H1 (cell line): ENCODE measurements at regions of chr12 and their contacts with region 1.

Region 1: DNA sequence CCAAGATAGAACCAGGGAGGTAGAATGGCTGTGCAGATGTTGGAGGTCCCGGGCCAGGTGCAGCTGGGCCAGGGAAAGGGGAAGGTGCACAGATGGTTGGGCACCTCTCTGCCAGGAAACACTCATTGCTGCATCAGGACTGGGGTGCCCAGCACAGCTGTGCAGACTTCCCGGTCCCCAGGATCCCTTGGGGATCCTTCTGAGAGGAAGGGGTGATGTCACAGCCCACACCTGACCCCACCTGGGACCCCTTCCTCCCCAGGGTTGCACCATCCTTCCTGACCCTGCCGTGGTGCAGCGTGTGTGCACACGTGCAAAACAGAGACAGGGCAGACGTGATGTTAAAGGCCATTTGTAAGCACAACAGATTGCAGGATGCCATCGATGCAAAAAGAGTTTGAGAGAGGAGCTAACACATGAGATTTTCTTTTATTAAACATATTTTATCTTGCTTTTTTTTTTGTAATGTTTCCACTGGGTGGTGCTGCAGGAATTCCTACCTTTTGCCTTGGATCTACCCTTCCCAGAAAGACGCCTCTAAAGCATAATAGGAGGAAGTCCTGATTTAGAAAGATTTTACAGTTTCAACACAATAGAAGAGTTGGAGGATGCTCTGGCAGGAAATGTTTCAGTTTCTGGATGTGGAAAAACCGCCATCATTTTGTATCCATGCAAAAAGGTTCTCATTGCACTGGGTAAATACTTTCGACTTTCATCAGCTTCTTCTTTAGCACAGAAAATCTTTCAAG is 14.8 kb downstream of the ELK3 start:
- DNase-seq: no peak
- H3K4me3 ChIP-seq: no peak overlapping the region
- H3K27ac ChIP-seq: no peak overlapping the region
- H3K4me1 ChIP-seq: peaks cover 0 to 9% (median 3%) of the 10 kb centered on the region in 4 experiments; a peak in 3 of 7 replicates
- H3K27me3 ChIP-seq: no peaks in the 10 kb centered on the region
- CTCF ChIP-seq: 0 out of 4 replicates have a peak, but pooled peaks of 1 of the 3 experiments have one; percentile 4
- EP300 ChIP-seq: no peak
- POLR2A ChIP-seq: no peak
- RAD21 ChIP-seq: peak; percentile 34 to 36

Region 2: GRCh38 chr12:95942524-95943329 is 266.2 kb before region 1 on chr12 and contains the start of gene CCDC38:
- CTCF ChIA-PET with region 1: no interaction called
- POLR2A ChIA-PET with region 1: no interaction called
- DNase-seq: peak in 1 of 2 experiments; percentile 84
- H3K4me3 ChIP-seq: peak within 1 kb of the TSS; percentile 59 to 95 (median 74)
- H3K27ac ChIP-seq: no peak within 1 kb of the TSS
- H3K4me1 ChIP-seq: peaks cover 0 to 4% (median under 1%) of the 10 kb centered on the region in 4 experiments; a peak in 3 of 7 replicates
- H3K27me3 ChIP-seq: peaks cover 0 to 11% (median 10%) of the 10 kb centered on the region in 4 experiments; a peak in 5 of 7 replicates
- CTCF ChIP-seq: no peak
- EP300 ChIP-seq: no peak
- POLR2A ChIP-seq: peak in 1 of 2 experiments; percentile 28; a peak in 1 of 3 replicates
- RAD21 ChIP-seq: no peak
- total RNA-seq, gene CCDC38: not detected in 2 replicates

Region 3: GRCh38 chr12:96015672-96016071 is 193.3 kb before region 1 on chr12:
- CTCF ChIA-PET with region 1: interaction called, 12 read pairs
- POLR2A ChIA-PET with region 1: no interaction called
- DNase-seq: no peak
- H3K4me3 ChIP-seq: no peak overlapping the region
- H3K27ac ChIP-seq: no peak overlapping the region
- H3K4me1 ChIP-seq: no peaks in the 10 kb centered on the region
- H3K27me3 ChIP-seq: peaks cover 0 to 1% (median 0%) of the 10 kb centered on the region in 4 experiments; a peak in 1 of 7 replicates
- CTCF ChIP-seq: peak; percentile 42 to 52 (median 50)
- EP300 ChIP-seq: no peak
- POLR2A ChIP-seq: no peak
- RAD21 ChIP-seq: peak; percentile 28 to 45; a peak in 3 of 4 replicates

Region 4: DNA sequence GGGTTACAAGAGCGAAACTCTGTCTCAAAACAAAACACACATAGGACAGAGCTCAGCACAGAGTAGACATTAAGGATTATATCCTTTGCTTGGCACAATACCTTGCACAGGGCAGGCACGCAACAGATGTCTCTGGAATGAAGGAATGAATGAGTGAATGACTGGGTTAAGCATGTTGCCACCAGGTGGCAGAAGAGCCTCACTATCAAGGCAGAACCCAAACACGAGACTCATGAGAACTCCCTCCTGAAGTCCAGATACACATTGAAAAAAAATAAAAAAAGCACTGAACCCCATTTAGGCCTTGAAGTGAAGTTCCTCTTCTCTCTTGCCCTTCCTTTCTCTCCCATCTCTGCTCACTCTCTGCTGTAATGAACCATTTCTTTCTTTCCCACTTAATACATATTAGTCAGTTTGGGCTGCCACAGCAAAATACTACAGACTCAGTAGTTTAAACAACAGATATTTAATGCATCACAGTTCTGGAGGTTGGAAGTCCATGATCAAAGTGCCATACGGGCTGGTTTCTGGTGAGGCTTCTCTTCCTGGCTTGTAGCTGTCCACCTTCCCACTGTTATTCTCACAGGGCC is 147.0 kb before region 1 on chr12:
- CTCF ChIA-PET with region 1: interaction called, 40 read pairs
- POLR2A ChIA-PET with region 1: no interaction called
- DNase-seq: peak; percentile 39 to 72
- H3K4me3 ChIP-seq: no peak overlapping the region
- H3K27ac ChIP-seq: no peak overlapping the region
- H3K4me1 ChIP-seq: peaks cover 0 to 8% (median 0%) of the 10 kb centered on the region in 4 experiments; a peak in 3 of 7 replicates
- H3K27me3 ChIP-seq: no peaks in the 10 kb centered on the region
- CTCF ChIP-seq: peak; percentile 50 to 87 (median 79)
- EP300 ChIP-seq: no peak
- POLR2A ChIP-seq: no peak
- RAD21 ChIP-seq: peak; percentile 95 to 96

Region 5: DNA sequence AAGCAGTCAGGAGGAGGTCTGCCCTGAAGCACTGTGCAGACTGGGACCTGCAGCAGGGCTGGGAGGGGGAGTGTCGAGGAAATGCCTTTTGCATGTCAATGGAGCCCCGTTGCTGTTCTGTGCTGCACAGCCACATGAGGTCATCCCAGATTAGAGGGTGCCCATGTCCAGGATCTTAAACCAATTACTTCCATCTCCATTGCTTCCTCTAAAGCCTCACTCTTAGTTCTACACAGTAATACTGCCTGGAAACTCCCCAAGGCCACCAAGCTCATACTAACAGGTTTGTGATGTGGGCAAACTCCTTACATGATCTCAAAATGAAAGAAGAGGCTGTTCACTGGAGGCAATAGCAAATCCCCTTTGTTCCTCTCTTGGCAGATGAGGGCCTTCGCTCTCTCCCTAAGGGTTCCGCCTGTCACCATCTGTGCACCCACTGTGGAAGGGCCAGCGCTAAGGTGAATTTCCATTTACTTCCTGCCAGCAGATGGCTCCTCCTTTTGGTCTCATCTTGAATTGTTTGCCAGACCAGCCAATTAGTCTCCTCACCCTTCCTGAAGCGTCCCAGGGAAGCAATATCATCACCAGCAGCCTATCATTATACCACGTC is 138.2 kb before region 1 on chr12:
- CTCF ChIA-PET with region 1: interaction called, 16 read pairs
- POLR2A ChIA-PET with region 1: no interaction called
- DNase-seq: peak in 1 of 2 experiments; percentile 54
- H3K4me3 ChIP-seq: no peak overlapping the region
- H3K27ac ChIP-seq: no peak overlapping the region
- H3K4me1 ChIP-seq: peaks cover 0 to 8% (median 3%) of the 10 kb centered on the region in 4 experiments; a peak in 3 of 7 replicates
- H3K27me3 ChIP-seq: no peaks in the 10 kb centered on the region
- CTCF ChIP-seq: peak in 2 of 3 experiments; percentile 34 to 60; a peak in 3 of 4 replicates
- EP300 ChIP-seq: no peak
- POLR2A ChIP-seq: no peak
- RAD21 ChIP-seq: peak; percentile 39 to 44

Region 6: GRCh38 chr12:96194971-96195844 is 13.8 kb before region 1 on chr12:
- CTCF ChIA-PET with region 1: interaction called, 3 read pairs
- POLR2A ChIA-PET with region 1: interaction called, 11 read pairs
- DNase-seq: peak in 1 of 2 experiments; percentile 68
- H3K4me3 ChIP-seq: peak overlapping the region; percentile 69 to 87 (median 81)
- H3K27ac ChIP-seq: no peak overlapping the region
- H3K4me1 ChIP-seq: peaks cover 0 to 2% (median 1%) of the 10 kb centered on the region in 4 experiments; a peak in 4 of 7 replicates
- H3K27me3 ChIP-seq: peaks cover 0 to 10% (median 6%) of the 10 kb centered on the region in 4 experiments; a peak in 5 of 7 replicates
- CTCF ChIP-seq: no peak
- EP300 ChIP-seq: no peak
- POLR2A ChIP-seq: no peak
- RAD21 ChIP-seq: no peak

Region 7: GRCh38 chr12:96219698-96220206 is 10.8 kb after region 1 on chr12:
- CTCF ChIA-PET with region 1: interaction called, 12 read pairs
- POLR2A ChIA-PET with region 1: interaction called, 4 read pairs
- DNase-seq: peak in 1 of 2 experiments; percentile 53
- H3K4me3 ChIP-seq: no peak overlapping the region
- H3K27ac ChIP-seq: no peak overlapping the region
- H3K4me1 ChIP-seq: peaks cover 0 to 12% (median 2%) of the 10 kb centered on the region in 4 experiments; a peak in 3 of 7 replicates
- H3K27me3 ChIP-seq: no peaks in the 10 kb centered on the region
- CTCF ChIP-seq: no peak
- EP300 ChIP-seq: no peak
- POLR2A ChIP-seq: no peak
- RAD21 ChIP-seq: no peak

Region 8: DNA sequence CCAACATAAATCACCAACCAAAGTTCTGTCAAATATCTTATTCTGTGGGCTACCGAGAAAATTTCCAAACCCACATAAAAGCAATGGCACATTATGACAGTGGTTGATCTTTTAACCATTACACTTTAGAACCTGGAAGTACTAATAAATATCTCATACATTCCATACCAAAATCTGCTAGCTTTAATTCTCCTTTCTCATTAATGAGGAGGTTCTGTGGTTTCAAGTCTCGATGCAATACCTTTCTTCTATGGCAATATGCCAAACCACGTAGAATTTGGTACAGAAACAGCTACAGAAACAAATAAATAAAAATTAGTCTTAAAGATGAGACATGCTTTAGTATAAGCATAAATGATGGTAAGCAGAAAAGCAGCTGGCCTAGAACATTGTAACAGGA is 85.9 kb after region 1 on chr12:
- CTCF ChIA-PET with region 1: no interaction called
- POLR2A ChIA-PET with region 1: no interaction called
- DNase-seq: no peak
- H3K4me3 ChIP-seq: no peak overlapping the region
- H3K27ac ChIP-seq: no peak overlapping the region
- H3K4me1 ChIP-seq: no peaks in the 10 kb centered on the region
- H3K27me3 ChIP-seq: no peaks in the 10 kb centered on the region
- CTCF ChIP-seq: no peak
- EP300 ChIP-seq: no peak
- POLR2A ChIP-seq: no peak
- RAD21 ChIP-seq: no peak

Region 9: GRCh38 chr12:96516472-96517430 is 307.8 kb after region 1 on chr12:
- CTCF ChIA-PET with region 1: interaction called, 31 read pairs
- POLR2A ChIA-PET with region 1: no interaction called
- DNase-seq: peak; percentile 63 to 77
- H3K4me3 ChIP-seq: no peak overlapping the region
- H3K27ac ChIP-seq: no peak overlapping the region
- H3K4me1 ChIP-seq: peaks cover 0 to 7% (median 2%) of the 10 kb centered on the region in 4 experiments; a peak in 3 of 7 replicates
- H3K27me3 ChIP-seq: no peaks in the 10 kb centered on the region
- CTCF ChIP-seq: peak in 2 of 3 experiments; percentile 62; a peak in 3 of 4 replicates
- EP300 ChIP-seq: no peak
- POLR2A ChIP-seq: no peak
- RAD21 ChIP-seq: peak; percentile 86 to 90